ENCODE measurements at regions of chr15 and their contacts with region 1.

Region 1: GRCh38 chr15:79881668-79882067 is 15.1 kb downstream of the MTHFS start:
- DNase-seq: no peak
- ATAC-seq: no peak
- H3K4me3 Mint-ChIP-seq: no peak overlapping the region
- H3K27ac Mint-ChIP-seq: no peak overlapping the region
- H3K4me1 Mint-ChIP-seq: peaks cover 21% of the 10 kb centered on the region
- H3K27me3 Mint-ChIP-seq: no peaks in the 10 kb centered on the region
- CTCF ChIP-seq: no peak

Region 2: GRCh38 chr15:79896637-79897379 is 15.1 kb after region 1 on chr15 and contains the start of gene MTHFS:
- CTCF ChIA-PET with region 1: interaction called, 6 read pairs
- POLR2A ChIA-PET with region 1: interaction called, 10 read pairs
- intact Hi-C with region 1: no loop called
- DNase-seq: peak; percentile 77
- ATAC-seq: peak; percentile 78
- H3K4me3 Mint-ChIP-seq: peak within 1 kb of the TSS; percentile 98
- H3K27ac Mint-ChIP-seq: peak within 1 kb of the TSS; percentile 100
- H3K4me1 Mint-ChIP-seq: peaks cover 47% of the 10 kb centered on the region
- H3K27me3 Mint-ChIP-seq: no peaks in the 10 kb centered on the region
- CTCF ChIP-seq: peak; percentile 20
- total RNA-seq, gene MTHFS: 27.3 to 28.4 TPM